ENCODE measurements at regions of chr12 and their contacts with region 1.

Region 1: GRCh38 chr12:3964439-3964838 is 91.2 kb upstream of the PARP11 start:
- DNase-seq: no peak
- ATAC-seq: no peak
- H3K4me3 ChIP-seq: no peak overlapping the region
- H3K4me3 Mint-ChIP-seq: no peak overlapping the region
- H3K27ac ChIP-seq: no peak overlapping the region
- H3K27ac Mint-ChIP-seq: peak overlapping the region; percentile 66
- H3K4me1 ChIP-seq: peaks cover 24% of the 10 kb centered on the region
- H3K4me1 Mint-ChIP-seq: peaks cover 33% of the 10 kb centered on the region
- H3K27me3 ChIP-seq: no peaks in the 10 kb centered on the region
- H3K27me3 Mint-ChIP-seq: no peaks in the 10 kb centered on the region
- CTCF ChIP-seq: no peak

Region 2: DNA sequence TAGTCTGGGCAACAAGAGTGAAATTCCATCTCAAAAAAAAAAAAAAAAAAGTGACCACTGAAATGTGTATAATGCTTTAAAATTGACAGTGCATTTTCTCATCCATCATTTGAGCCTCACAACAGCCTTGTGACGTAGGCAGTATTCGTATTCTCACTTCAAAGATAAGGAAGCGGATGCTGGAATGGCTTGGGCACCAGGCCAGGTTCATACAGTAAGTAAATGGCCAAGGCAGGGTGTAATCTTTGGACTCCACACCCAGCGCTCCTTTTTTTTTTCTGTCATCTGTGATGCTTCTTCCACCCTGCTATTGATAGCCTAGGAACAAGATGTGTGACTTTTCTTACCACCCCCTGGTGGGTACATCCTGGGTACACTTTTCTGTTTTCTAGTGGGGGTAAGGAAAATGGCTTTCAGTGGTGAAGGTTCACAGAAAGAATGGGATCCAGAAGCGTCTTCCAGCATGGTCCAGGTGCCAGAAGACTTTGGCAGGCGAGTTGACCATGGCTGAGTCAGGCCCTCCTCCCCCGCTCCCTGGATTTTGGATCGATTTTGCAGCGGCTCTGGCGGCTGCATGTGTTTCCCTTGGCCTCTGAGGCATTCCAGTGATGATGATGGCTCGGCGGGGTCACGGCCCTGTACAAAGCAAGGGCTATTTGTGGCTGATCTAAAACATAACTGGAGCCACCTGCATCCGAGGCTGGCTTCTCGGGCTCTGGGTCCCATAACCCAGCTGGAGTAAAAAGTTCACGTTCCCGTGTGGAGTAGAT is 1801.1 kb before region 1 on chr12:
- CTCF ChIA-PET with region 1: no interaction called
- POLR2A ChIA-PET with region 1: no interaction called
- intact Hi-C with region 1: no loop called
- DNase-seq: no peak
- ATAC-seq: no peak
- H3K4me3 ChIP-seq: no peak overlapping the region
- H3K4me3 Mint-ChIP-seq: no peak overlapping the region
- H3K27ac ChIP-seq: no peak overlapping the region
- H3K27ac Mint-ChIP-seq: no peak overlapping the region
- H3K4me1 ChIP-seq: no peaks in the 10 kb centered on the region
- H3K4me1 Mint-ChIP-seq: no peaks in the 10 kb centered on the region
- H3K27me3 ChIP-seq: peaks cover 0 to 4% of the 10 kb centered on the region in 2 experiments
- H3K27me3 Mint-ChIP-seq: peaks cover 11% of the 10 kb centered on the region
- CTCF ChIP-seq: no peak

Region 3: DNA sequence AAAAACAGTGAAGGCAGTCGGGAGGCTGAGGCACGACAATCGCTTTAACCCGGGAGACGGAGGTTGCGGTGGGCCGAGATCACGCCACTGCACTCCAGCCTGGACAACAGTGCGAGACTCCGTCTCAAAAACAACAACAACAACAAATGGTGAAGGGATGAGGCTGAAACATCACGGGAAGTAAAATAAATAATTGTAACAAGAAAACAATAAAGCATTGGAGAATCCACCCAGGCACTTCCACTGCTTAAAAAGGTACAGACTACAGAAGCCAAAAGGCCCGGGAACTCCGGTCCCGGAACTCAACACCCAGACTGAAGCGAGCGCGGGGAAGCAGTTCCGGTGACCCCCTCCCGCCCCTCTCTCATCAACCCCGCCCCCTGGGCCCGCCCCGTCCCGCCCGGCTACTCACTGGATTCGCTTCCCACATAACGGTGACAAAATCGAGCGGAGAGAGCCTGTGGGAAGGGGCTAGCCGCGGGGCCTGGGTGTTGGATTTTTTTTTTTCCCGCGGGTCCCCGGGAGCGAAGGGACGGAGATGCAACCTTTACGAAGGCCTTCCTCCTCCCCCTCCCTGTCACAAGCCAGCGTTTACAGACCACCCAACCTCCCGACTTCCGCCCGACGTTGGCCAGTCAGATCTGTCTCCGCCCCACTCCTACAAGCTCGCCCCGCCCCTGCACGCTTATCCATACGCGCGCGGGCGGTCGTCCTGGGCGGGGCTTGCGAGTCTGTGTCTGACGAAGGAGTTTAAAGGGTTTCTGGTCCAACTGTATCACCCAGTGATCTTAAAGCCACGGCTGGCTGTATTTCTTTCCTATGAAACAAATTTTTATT is 91.4 kb before region 1 on chr12 and contains the start of gene PARP11:
- CTCF ChIA-PET with region 1: no interaction called
- POLR2A ChIA-PET with region 1: interaction called, 11 read pairs
- intact Hi-C with region 1: no loop called
- DNase-seq: peak; percentile 95 to 99 (median 98)
- ATAC-seq: peak; percentile 94
- H3K4me3 ChIP-seq: peak within 1 kb of the TSS; percentile 79
- H3K4me3 Mint-ChIP-seq: peak within 1 kb of the TSS; percentile 95
- H3K27ac ChIP-seq: peak within 1 kb of the TSS; percentile 88 to 97
- H3K27ac Mint-ChIP-seq: peak within 1 kb of the TSS; percentile 99
- H3K4me1 ChIP-seq: peaks cover 30% of the 10 kb centered on the region
- H3K4me1 Mint-ChIP-seq: peaks cover 59% of the 10 kb centered on the region
- H3K27me3 ChIP-seq: no peaks in the 10 kb centered on the region
- H3K27me3 Mint-ChIP-seq: no peaks in the 10 kb centered on the region
- CTCF ChIP-seq: no peak
- total RNA-seq, gene PARP11: 13.4 TPM

Region 4: GRCh38 chr12:3896801-3897331 is 67.6 kb before region 1 on chr12:
- CTCF ChIA-PET with region 1: interaction called, 14 read pairs
- POLR2A ChIA-PET with region 1: interaction called, 44 read pairs
- intact Hi-C with region 1: loop called in 1 of 2 experiments (anchors 1 kb)
- DNase-seq: peak in 3 of 14 experiments; percentile 36 to 43 (median 42)
- ATAC-seq: peak; percentile 33
- H3K4me3 ChIP-seq: peak overlapping the region; percentile 33
- H3K4me3 Mint-ChIP-seq: peak overlapping the region; percentile 76
- H3K27ac ChIP-seq: peak overlapping the region; percentile 69 to 87
- H3K27ac Mint-ChIP-seq: no peak overlapping the region
- H3K4me1 ChIP-seq: peaks cover 78% of the 10 kb centered on the region
- H3K4me1 Mint-ChIP-seq: peaks cover 48% of the 10 kb centered on the region
- H3K27me3 ChIP-seq: no peaks in the 10 kb centered on the region
- H3K27me3 Mint-ChIP-seq: no peaks in the 10 kb centered on the region
- CTCF ChIP-seq: no peak

Region 5: DNA sequence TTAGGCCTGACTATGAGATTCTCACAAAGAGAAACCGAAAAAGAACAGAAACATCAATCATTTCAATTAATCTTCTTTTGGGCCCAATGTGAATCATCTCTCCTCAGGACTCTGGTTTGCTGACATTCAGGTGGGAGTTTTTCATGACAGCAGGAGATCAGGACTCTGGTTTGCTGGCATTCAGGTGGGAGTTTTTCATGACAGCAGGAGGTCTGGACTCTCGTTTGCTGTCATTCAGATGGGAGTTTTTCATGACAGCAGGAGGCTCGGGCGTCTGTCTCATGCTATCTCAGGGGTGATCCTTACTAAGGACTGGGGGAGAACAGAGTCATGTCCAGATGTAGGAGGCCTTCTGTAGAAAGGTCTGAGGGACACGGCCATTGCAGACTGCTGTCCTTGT is 51.2 kb before region 1 on chr12:
- CTCF ChIA-PET with region 1: interaction called, 5 read pairs
- POLR2A ChIA-PET with region 1: interaction called, 13 read pairs
- intact Hi-C with region 1: no loop called
- DNase-seq: no peak
- ATAC-seq: no peak
- H3K4me3 ChIP-seq: no peak overlapping the region
- H3K4me3 Mint-ChIP-seq: no peak overlapping the region
- H3K27ac ChIP-seq: no peak overlapping the region
- H3K27ac Mint-ChIP-seq: peak overlapping the region; percentile 57
- H3K4me1 ChIP-seq: peaks cover 1% of the 10 kb centered on the region
- H3K4me1 Mint-ChIP-seq: peaks cover 28% of the 10 kb centered on the region
- H3K27me3 ChIP-seq: no peaks in the 10 kb centered on the region
- H3K27me3 Mint-ChIP-seq: no peaks in the 10 kb centered on the region
- CTCF ChIP-seq: no peak

Region 6: DNA sequence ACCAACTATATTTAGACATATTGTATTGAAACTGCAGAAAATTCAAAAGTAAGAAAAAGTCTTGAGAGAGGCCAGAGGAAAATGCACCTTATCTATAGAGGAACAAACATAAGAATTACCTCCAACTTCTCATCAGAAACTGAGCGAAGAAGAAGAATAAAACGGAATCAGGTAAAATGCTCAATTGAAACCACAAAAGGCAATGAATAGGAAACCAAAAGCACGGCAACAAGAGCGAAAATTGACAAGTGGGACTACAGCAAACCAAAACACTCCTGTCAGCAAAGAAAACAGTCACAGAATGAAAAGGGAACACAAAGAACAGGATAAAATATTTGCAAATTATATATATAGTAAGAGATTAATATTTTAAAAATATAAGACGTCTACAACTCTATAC is 29.4 kb before region 1 on chr12:
- CTCF ChIA-PET with region 1: interaction called, 10 read pairs
- POLR2A ChIA-PET with region 1: interaction called, 22 read pairs
- intact Hi-C with region 1: loop called in 1 of 2 experiments (anchors 1 kb)
- DNase-seq: peak in 4 of 14 experiments; percentile 34 to 69 (median 62)
- ATAC-seq: peak; percentile 37
- H3K4me3 ChIP-seq: peak overlapping the region; percentile 32
- H3K4me3 Mint-ChIP-seq: peak overlapping the region; percentile 25
- H3K27ac ChIP-seq: peak overlapping the region in 1 of 2 donors; percentile 42
- H3K27ac Mint-ChIP-seq: peak overlapping the region; percentile 75
- H3K4me1 ChIP-seq: peaks cover 47% of the 10 kb centered on the region
- H3K4me1 Mint-ChIP-seq: peaks cover 69% of the 10 kb centered on the region
- H3K27me3 ChIP-seq: no peaks in the 10 kb centered on the region
- H3K27me3 Mint-ChIP-seq: no peaks in the 10 kb centered on the region
- CTCF ChIP-seq: no peak

Region 7: GRCh38 chr12:3988519-3989448 is 24.3 kb after region 1 on chr12:
- CTCF ChIA-PET with region 1: interaction called, 8 read pairs
- POLR2A ChIA-PET with region 1: interaction called, 37 read pairs
- intact Hi-C with region 1: no loop called
- DNase-seq: peak in 8 of 14 experiments; percentile 9 to 63 (median 45)
- ATAC-seq: peak; percentile 94
- H3K4me3 ChIP-seq: peak overlapping the region; percentile 10
- H3K4me3 Mint-ChIP-seq: peak overlapping the region; percentile 52
- H3K27ac ChIP-seq: peak overlapping the region; percentile 43 to 55
- H3K27ac Mint-ChIP-seq: peak overlapping the region; percentile 84
- H3K4me1 ChIP-seq: peaks cover 22% of the 10 kb centered on the region
- H3K4me1 Mint-ChIP-seq: peaks cover 36% of the 10 kb centered on the region
- H3K27me3 ChIP-seq: no peaks in the 10 kb centered on the region
- H3K27me3 Mint-ChIP-seq: no peaks in the 10 kb centered on the region
- CTCF ChIP-seq: no peak

Region 8: GRCh38 chr12:4269279-4269991 is 305.0 kb after region 1 on chr12:
- CTCF ChIA-PET with region 1: interaction called, 5 read pairs
- POLR2A ChIA-PET with region 1: interaction called, 29 read pairs
- intact Hi-C with region 1: loop called (anchors 10 kb)
- DNase-seq: peak; percentile 85 to 96 (median 90)
- ATAC-seq: peak; percentile 32
- H3K4me3 ChIP-seq: peak overlapping the region; percentile 95
- H3K4me3 Mint-ChIP-seq: peak overlapping the region; percentile 96
- H3K27ac ChIP-seq: peak overlapping the region; percentile 79 to 99
- H3K27ac Mint-ChIP-seq: peak overlapping the region; percentile 99
- H3K4me1 ChIP-seq: peaks cover 46% of the 10 kb centered on the region
- H3K4me1 Mint-ChIP-seq: peaks cover 31% of the 10 kb centered on the region
- H3K27me3 ChIP-seq: no peaks in the 10 kb centered on the region
- H3K27me3 Mint-ChIP-seq: peaks cover 6% of the 10 kb centered on the region
- CTCF ChIP-seq: no peak

Measured in CD4-positive, alpha-beta T cell (primary cell).